ENCODE measurements at regions of chr3 and their contacts with region 1.

Region 1: DNA sequence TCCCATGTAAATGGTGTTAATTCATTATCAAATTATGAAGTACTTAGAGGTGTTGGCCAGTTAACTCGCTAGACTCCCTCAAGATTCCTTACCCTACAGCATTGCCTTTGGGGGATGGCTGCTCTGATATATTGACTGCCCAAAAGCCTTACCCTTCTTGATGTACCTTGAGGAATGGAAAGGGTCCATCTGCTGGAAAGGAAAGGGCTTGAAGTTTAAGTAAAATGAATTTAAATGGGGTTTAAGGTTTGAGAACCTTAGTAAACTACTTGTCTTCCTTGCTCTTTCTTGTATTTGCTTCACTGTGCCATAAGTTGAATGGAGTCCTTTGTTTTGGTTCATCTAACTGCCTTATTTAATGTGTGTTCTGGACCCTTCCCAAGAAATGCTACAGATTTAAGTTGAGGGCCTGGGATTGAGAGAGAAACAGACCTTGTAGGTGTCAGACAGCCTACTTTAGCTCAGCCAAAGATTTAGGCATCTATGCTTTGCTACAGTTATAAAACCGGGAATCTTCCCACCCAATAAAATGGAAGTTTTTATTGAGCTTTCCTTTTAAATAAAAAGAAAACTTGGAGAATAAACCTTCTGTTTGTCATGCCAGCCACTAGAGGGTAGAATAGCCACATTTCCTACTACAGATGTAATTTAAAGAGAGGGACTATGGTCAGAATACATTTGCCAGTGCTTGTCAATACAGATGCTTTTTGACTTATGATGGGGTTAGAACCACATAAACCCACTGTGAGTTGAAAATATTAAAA is 25.3 kb downstream of the CMSS1 start:
- DNase-seq: peak in 1 of 2 experiments; percentile 53
- ATAC-seq: peak; percentile 78 to 86; a peak in 5 of 6 replicates
- H3K4me3 ChIP-seq: no peak overlapping the region
- H3K27ac ChIP-seq: no peak overlapping the region
- H3K4me1 ChIP-seq: no peaks in the 10 kb centered on the region; the same call in 2 of the 3 replicates
- CTCF ChIP-seq: peak; percentile 87
- EP300 ChIP-seq: no peak
- POLR2A ChIP-seq: no peak
- RAD21 ChIP-seq: peak; percentile 85 to 91

Region 2: GRCh38 chr3:99872923-99873254 is 29.9 kb after region 1 on chr3:
- CTCF ChIA-PET with region 1: interaction called, 12 read pairs
- POLR2A ChIA-PET with region 1: no interaction called
- DNase-seq: no peak
- ATAC-seq: no peak
- H3K4me3 ChIP-seq: no peak overlapping the region
- H3K27ac ChIP-seq: no peak overlapping the region
- H3K4me1 ChIP-seq: peaks cover 28% of the 10 kb centered on the region
- CTCF ChIP-seq: no peak
- EP300 ChIP-seq: no peak
- POLR2A ChIP-seq: no peak
- RAD21 ChIP-seq: no peak

Region 3: DNA sequence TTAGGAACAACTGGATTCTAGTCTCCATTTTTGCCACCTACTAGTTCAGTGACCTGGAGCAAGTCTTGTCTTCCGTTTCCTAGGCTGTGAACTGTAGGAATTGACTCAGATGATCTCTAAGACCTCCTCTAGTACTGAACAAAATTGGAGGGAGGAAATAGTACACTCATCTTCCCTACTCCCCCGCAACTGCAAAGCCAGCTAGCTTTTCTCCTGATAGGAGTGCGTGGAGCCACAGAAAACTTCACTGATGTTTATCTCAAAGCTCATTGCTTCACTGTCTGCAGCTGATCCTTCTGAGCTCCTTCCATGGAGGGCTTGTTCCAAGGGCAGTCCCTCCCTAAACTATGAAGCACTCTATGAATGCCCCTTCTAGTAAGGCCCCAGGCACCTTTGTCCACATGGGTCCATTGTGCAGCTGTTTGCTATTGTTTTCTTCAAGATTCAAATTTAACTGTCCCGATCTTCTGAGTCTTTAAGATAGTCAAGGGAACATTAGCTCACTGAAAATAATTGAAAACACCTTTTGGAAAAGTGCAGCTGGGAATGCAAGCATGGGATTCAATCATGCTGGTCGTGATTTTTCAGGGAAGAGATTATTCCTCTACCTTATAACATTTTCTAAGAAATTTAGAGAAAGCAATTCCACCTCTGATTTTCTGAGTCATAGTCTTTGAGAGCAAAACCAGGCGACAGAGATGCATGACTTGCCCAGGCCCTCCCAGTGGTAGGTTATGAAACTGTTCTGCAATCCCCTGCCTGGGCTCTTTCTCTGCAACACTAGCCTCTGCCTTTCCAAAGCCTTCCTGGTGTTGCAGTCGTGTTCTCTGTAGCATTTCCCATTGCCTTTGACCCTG is 247.0 kb after region 1 on chr3:
- CTCF ChIA-PET with region 1: interaction called, 19 read pairs
- POLR2A ChIA-PET with region 1: no interaction called
- DNase-seq: peak; percentile 40 to 49
- ATAC-seq: peak; percentile 93 to 99
- H3K4me3 ChIP-seq: no peak overlapping the region
- H3K27ac ChIP-seq: peak overlapping the region in 1 of 2 experiments; percentile 16; a peak in 1 of 6 replicates
- H3K4me1 ChIP-seq: peaks cover 43% of the 10 kb centered on the region
- CTCF ChIP-seq: peak; percentile 45
- EP300 ChIP-seq: no peak
- POLR2A ChIP-seq: no peak
- RAD21 ChIP-seq: peak; percentile 37 to 46; a peak in 4 of 5 replicates

Region 4: GRCh38 chr3:100254168-100254777 is 411.3 kb after region 1 on chr3:
- CTCF ChIA-PET with region 1: interaction called, 74 read pairs
- POLR2A ChIA-PET with region 1: interaction called, 7 read pairs
- DNase-seq: peak; percentile 42 to 65
- ATAC-seq: peak; percentile 88 to 97
- H3K4me3 ChIP-seq: no peak overlapping the region
- H3K27ac ChIP-seq: no peak overlapping the region
- H3K4me1 ChIP-seq: no peaks in the 10 kb centered on the region
- CTCF ChIP-seq: peak; percentile 88
- EP300 ChIP-seq: no peak
- POLR2A ChIP-seq: no peak
- RAD21 ChIP-seq: peak; percentile 95 to 96

Region 5: GRCh38 chr3:100289339-100289738 is 446.3 kb after region 1 on chr3:
- CTCF ChIA-PET with region 1: interaction called, 11 read pairs
- POLR2A ChIA-PET with region 1: no interaction called
- DNase-seq: no peak
- ATAC-seq: no peak
- H3K4me3 ChIP-seq: no peak overlapping the region
- H3K27ac ChIP-seq: no peak overlapping the region
- H3K4me1 ChIP-seq: no peaks in the 10 kb centered on the region
- CTCF ChIP-seq: no peak
- EP300 ChIP-seq: no peak
- POLR2A ChIP-seq: no peak
- RAD21 ChIP-seq: no peak

Measured in A549 (cell line).